ENCODE measurements at regions of chr2 and their contacts with region 1.

Region 1: DNA sequence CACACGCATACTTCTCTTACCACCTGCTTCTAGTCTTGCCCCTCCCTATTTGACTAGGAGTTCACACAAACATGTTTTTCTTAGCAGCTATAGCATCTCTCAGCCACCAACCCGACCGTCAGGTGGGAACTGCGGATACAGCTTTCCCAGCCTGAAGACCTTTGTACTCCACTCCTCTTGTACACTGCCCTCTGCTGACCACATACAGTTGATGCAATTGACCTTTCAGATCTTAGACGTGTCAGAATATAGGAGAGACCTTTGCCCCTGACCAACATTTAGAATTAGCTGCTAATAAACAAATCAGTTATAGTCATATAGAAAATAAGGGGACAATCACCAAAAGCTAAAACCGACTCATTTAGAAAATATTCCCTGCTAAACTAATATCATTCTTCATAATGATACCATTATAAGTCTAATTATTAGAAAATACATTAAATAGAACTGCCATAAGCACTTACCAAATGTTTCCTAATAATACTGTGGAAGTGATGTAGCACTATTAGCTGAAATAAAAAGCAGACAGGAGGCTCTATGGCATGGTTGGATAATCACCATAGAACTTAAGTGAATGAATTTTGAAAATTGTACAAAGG is 208.4 kb downstream of the RAD51AP2 start:
- DNase-seq: no peak
- ATAC-seq: peak; percentile 69
- H3K4me3 Mint-ChIP-seq: no peak overlapping the region
- H3K27ac Mint-ChIP-seq: no peak overlapping the region
- H3K4me1 Mint-ChIP-seq: peaks cover 2% of the 10 kb centered on the region
- H3K27me3 Mint-ChIP-seq: peaks cover 7% of the 10 kb centered on the region
- CTCF ChIP-seq: no peak

Region 2: DNA sequence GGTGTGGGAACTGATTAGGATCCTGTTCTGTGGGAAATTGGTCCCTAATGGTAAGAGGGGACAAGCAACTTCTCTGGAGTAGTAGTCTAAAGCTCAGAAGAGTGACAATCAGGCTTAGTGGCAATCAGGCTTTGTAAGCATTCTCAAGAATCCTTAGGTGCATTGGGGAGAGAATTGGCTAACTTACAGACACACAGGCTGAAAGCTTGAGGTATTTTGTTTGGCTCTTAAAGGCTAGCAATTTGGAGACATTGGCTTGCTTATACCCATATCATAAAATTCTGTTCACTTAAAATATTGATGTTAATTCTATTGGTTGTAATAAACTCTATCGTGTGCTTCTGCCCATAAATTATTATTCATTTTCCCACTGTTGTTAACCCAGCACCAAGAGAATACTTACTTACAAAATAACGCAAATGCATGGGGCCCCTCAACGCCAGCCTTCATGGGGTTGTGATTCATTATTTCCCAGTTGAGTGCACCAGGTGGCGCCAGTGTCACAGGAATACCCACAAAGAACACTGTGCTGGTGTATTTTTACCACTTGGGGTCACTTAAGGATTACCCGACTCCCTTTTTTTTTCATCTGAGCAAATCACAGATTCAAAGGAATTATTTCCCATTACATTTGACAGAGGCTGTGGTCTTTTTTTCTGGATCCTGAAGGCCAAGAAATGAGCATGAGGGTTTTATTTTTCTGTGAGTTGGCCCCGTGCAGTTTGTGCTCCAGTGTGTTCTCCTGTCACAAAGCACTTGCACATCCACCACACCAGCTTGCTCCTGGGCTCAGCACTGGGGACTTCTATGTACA is 1672.7 kb before region 1 on chr2:
- CTCF ChIA-PET with region 1: no interaction called
- POLR2A ChIA-PET with region 1: no interaction called
- intact Hi-C with region 1: loop called (anchors 2 kb)
- DNase-seq: peak; percentile 35
- ATAC-seq: peak; percentile 66
- H3K4me3 Mint-ChIP-seq: no peak overlapping the region
- H3K27ac Mint-ChIP-seq: no peak overlapping the region
- H3K4me1 Mint-ChIP-seq: no peaks in the 10 kb centered on the region
- H3K27me3 Mint-ChIP-seq: no peaks in the 10 kb centered on the region
- CTCF ChIP-seq: no peak

Region 3: GRCh38 chr2:16773080-16773713 is 536.6 kb before region 1 on chr2:
- CTCF ChIA-PET with region 1: interaction called, 131 read pairs
- POLR2A ChIA-PET with region 1: no interaction called
- intact Hi-C with region 1: loop called (anchors 1 kb)
- DNase-seq: no peak
- ATAC-seq: peak; percentile 67
- H3K4me3 Mint-ChIP-seq: no peak overlapping the region
- H3K27ac Mint-ChIP-seq: no peak overlapping the region
- H3K4me1 Mint-ChIP-seq: peaks cover 3% of the 10 kb centered on the region
- H3K27me3 Mint-ChIP-seq: peaks cover 19% of the 10 kb centered on the region
- CTCF ChIP-seq: peak; percentile 35

Region 4: DNA sequence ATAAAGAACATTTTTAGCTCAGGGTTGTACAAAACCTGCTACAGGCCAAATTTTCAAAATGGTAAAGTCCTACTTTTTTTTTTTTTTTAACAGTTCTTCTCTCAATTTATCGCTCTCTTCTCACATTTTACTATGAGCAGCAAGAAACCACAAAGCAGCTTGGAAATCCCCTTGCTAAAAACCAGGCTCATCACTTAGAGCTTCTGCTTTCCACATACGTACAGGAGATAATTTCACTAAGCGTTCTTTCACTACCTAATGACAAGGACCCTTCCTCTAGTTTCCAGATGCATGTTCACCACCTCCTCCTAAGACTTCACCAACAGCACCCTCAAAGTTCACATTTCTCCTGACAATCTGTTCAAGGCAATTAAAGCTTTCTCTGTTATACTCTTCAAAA is 349.3 kb before region 1 on chr2:
- CTCF ChIA-PET with region 1: no interaction called
- POLR2A ChIA-PET with region 1: no interaction called
- intact Hi-C with region 1: loop called (anchors 1 kb)
- DNase-seq: no peak
- ATAC-seq: peak; percentile 81
- H3K4me3 Mint-ChIP-seq: peak overlapping the region; percentile 64
- H3K27ac Mint-ChIP-seq: peak overlapping the region; percentile 88
- H3K4me1 Mint-ChIP-seq: peaks cover 48% of the 10 kb centered on the region
- H3K27me3 Mint-ChIP-seq: no peaks in the 10 kb centered on the region
- CTCF ChIP-seq: no peak

Region 5: DNA sequence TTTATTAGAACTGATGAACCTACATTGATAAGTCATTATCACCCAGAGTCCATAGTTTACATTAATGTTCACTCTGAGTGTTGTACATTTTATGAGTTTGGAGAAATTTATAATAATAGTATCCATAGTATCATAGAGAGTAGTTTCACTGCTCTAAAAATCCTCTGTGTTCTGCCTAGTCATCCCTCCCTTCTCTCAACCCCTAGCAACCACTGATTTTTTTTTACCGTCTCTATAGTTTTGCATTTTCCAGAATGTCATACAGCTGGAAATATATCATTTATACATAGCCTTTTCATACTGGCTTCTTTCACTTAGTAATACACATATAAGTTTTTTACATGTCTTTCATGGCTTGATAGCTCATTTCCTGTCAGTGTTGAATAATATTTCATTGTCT is 22.7 kb before region 1 on chr2:
- CTCF ChIA-PET with region 1: no interaction called
- POLR2A ChIA-PET with region 1: no interaction called
- intact Hi-C with region 1: no loop called
- DNase-seq: no peak
- ATAC-seq: no peak
- H3K4me3 Mint-ChIP-seq: no peak overlapping the region
- H3K27ac Mint-ChIP-seq: no peak overlapping the region
- H3K4me1 Mint-ChIP-seq: no peaks in the 10 kb centered on the region
- H3K27me3 Mint-ChIP-seq: no peaks in the 10 kb centered on the region
- CTCF ChIP-seq: no peak

Region 6: DNA sequence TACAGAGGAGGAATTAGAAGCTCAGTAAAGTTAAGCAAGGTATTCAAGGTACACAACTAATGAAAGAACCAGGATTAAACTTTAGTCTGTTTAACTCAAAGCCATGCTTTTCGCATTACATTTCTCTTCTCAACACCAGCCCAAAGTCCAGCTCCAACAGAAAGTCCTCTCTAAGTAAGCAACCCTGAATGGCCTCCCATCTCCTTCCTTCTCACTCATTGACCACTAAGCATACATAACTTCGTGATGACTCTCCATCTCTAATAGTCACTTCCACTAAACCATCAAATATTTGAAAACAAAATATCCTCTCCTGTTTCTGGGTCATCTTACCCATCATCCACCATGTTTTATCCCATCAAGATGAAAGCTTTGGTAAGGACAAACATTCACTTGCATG is 11.4 kb before region 1 on chr2:
- CTCF ChIA-PET with region 1: interaction called, 17 read pairs
- POLR2A ChIA-PET with region 1: no interaction called
- intact Hi-C with region 1: no loop called
- DNase-seq: no peak
- ATAC-seq: no peak
- H3K4me3 Mint-ChIP-seq: no peak overlapping the region
- H3K27ac Mint-ChIP-seq: no peak overlapping the region
- H3K4me1 Mint-ChIP-seq: no peaks in the 10 kb centered on the region
- H3K27me3 Mint-ChIP-seq: peaks cover 2% of the 10 kb centered on the region
- CTCF ChIP-seq: no peak